ENCODE measurements at regions of chr1 and their contacts with region 1.

Region 1: DNA sequence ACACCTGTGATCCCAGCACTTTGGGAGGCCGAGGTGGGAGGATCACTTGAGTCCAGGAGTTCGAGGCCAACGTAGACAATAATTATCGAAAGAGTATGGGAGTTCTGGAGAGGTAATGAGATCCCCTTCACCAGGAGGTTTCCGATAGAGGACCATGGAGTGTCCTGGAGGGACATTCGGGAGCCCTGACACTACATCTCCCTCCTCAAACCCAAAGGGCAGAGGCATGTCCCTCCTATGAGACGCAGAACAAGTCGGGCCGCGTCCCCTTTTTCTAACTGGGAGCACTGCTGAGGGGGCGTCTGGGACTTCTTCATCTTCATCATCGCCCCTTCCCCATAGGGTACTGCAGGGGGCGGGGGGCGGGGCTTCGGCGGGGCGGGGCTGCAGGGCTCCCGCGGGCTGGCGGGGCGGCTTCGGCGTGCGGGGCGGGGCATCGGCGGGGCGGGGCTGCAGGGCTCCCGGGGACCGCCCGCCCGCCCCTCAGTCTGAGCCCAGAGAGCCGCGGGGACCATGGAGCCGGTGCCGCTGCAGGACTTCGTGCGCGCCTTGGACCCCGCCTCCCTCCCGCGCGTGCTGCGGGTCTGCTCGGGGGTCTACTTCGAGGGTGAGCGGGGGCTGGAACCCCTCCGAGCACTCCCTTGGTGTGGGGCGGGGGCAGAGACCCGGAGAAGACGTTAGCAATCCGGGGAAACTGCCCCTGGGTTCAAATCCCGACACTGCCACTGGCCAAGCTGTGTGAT is at the start of gene THEMIS2:
- DNase-seq: peak; percentile 68
- H3K4me3 Mint-ChIP-seq: peak within 1 kb of the TSS; percentile 94
- H3K27ac Mint-ChIP-seq: peak within 1 kb of the TSS; percentile 76
- H3K4me1 Mint-ChIP-seq: peaks cover 26% of the 10 kb centered on the region
- H3K27me3 Mint-ChIP-seq: no peaks in the 10 kb centered on the region
- total RNA-seq, gene THEMIS2: 25.1 and 29.1 TPM in 2 replicates

Region 2: GRCh38 chr1:27887215-27888021 is 15.2 kb after region 1 on chr1:
- intact Hi-C with region 1: loop called (anchors 2 kb)
- DNase-seq: peak; percentile 62
- H3K4me3 Mint-ChIP-seq: peak overlapping the region; percentile 40
- H3K27ac Mint-ChIP-seq: peak overlapping the region; percentile 82
- H3K4me1 Mint-ChIP-seq: peaks cover 73% of the 10 kb centered on the region
- H3K27me3 Mint-ChIP-seq: no peaks in the 10 kb centered on the region